Activated CD4-positive, alpha-beta memory T cell treated with anti-CD3 and anti-CD28 coated beads for 36 hours (primary cell): ENCODE measurements at regions of chrX and their contacts with region 1.

Region 1: GRCh38 chrX:55754861-55755294 is 37.3 kb downstream of the RRAGB start:
- DNase-seq: peak; percentile 29
- H3K4me3 Mint-ChIP-seq: no peak overlapping the region
- H3K27ac Mint-ChIP-seq: no peak overlapping the region
- H3K4me1 Mint-ChIP-seq: peaks cover 10% of the 10 kb centered on the region
- H3K27me3 Mint-ChIP-seq: no peaks in the 10 kb centered on the region

Region 2: GRCh38 chrX:55794405-55794804 is 39.5 kb after region 1 on chrX:
- CTCF ChIA-PET with region 1: no interaction called
- POLR2A ChIA-PET with region 1: no interaction called
- intact Hi-C with region 1: loop called (anchors 1 kb)
- DNase-seq: peak; percentile 11
- H3K4me3 Mint-ChIP-seq: no peak overlapping the region
- H3K27ac Mint-ChIP-seq: no peak overlapping the region
- H3K4me1 Mint-ChIP-seq: no peaks in the 10 kb centered on the region
- H3K27me3 Mint-ChIP-seq: no peaks in the 10 kb centered on the region

Region 3: DNA sequence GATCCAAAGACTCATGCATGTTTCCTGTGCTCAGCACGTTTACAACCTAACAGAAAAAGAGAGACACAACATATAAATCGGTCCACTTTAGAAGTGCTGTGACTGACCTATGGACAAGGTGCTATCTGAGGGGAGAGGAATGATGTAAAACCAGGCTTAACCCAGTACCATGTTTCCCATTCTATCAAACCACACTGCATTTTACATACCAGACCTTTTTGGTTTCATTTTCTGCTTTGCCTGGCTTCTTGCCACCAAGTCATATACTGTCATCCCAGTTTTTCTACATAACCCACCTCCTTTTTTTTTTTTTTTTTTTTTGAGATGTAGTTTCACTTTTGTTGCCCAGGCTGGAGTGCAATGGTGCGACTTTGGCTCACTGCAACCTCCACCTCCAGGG is 559.5 kb after region 1 on chrX:
- CTCF ChIA-PET with region 1: no interaction called
- POLR2A ChIA-PET with region 1: no interaction called
- intact Hi-C with region 1: no loop called
- DNase-seq: peak; percentile 30
- H3K4me3 Mint-ChIP-seq: peak overlapping the region; percentile 26
- H3K27ac Mint-ChIP-seq: no peak overlapping the region
- H3K4me1 Mint-ChIP-seq: peaks cover 6% of the 10 kb centered on the region
- H3K27me3 Mint-ChIP-seq: no peaks in the 10 kb centered on the region